ENCODE measurements at regions of chr5 and their contacts with region 1.

Region 1: DNA sequence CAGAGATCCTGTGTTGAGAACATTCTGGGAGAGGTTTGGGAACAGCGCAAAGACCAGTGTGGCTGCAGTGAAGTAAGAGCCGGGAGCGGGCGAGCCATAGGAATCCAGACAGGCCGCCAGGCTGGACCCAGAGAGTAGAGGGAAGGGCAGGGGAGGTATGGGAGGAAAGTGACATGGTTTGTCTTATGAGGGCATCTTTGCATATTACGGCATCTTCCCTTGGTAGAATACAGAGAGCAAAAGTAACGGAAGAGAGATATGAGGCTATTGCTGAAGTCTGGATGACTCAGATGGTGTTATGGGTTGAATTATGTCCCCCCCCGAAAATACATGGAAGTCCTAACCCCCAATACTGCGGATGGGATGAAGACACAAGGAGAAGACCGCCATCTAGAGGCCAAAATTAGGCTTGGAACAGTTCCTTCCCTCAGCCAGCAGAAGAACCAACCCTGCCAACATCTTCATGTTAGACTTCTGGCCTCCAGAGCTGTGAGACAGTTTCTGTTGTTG is 268.2 kb downstream of the MAST4 start:
- DNase-seq: no peak
- H3K4me3 Mint-ChIP-seq: no peak overlapping the region
- H3K27ac Mint-ChIP-seq: no peak overlapping the region
- H3K4me1 Mint-ChIP-seq: peaks cover 16% of the 10 kb centered on the region
- H3K27me3 Mint-ChIP-seq: peaks cover 44% of the 10 kb centered on the region

Region 2: GRCh38 chr5:66742083-66742895 is 122.1 kb before region 1 on chr5:
- intact Hi-C with region 1: loop called (anchors 10 kb)
- DNase-seq: no peak
- H3K4me3 Mint-ChIP-seq: no peak overlapping the region
- H3K27ac Mint-ChIP-seq: no peak overlapping the region
- H3K4me1 Mint-ChIP-seq: peaks cover 15% of the 10 kb centered on the region
- H3K27me3 Mint-ChIP-seq: no peaks in the 10 kb centered on the region

Region 3: GRCh38 chr5:66814146-66814991 is 50.0 kb before region 1 on chr5:
- intact Hi-C with region 1: loop called (anchors 1 kb)
- DNase-seq: no peak
- H3K4me3 Mint-ChIP-seq: no peak overlapping the region
- H3K27ac Mint-ChIP-seq: no peak overlapping the region
- H3K4me1 Mint-ChIP-seq: peaks cover 8% of the 10 kb centered on the region
- H3K27me3 Mint-ChIP-seq: peaks cover 36% of the 10 kb centered on the region

Region 4: DNA sequence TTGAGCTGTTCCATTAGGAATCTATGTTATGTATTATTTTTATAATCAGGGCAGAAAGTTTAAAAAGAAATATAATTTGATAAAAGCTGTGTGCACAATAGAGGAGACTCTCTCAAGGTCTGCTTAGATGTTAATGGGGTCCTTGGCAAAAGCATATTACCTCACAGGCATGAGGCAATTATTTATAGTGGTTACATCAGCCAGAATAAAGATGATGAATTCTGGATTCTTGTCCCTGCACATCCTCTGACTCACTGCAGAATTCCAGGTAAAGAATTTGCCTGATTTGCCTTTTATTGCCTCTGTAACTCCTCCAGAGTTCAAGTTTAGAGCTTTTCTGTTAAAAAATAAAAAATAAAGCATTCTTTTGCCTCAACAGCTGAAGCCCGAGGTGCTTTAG is 14.6 kb before region 1 on chr5:
- intact Hi-C with region 1: no loop called
- DNase-seq: no peak
- H3K4me3 Mint-ChIP-seq: no peak overlapping the region
- H3K27ac Mint-ChIP-seq: no peak overlapping the region
- H3K4me1 Mint-ChIP-seq: peaks cover 12% of the 10 kb centered on the region
- H3K27me3 Mint-ChIP-seq: peaks cover 33% of the 10 kb centered on the region